PC-9 (cell line): ENCODE measurements at regions of chr3 and their contacts with region 1.

Region 1: GRCh38 chr3:111967651-111968274 is 11.1 kb upstream of the ABHD10 start:
- DNase-seq: peak; percentile 71 to 85
- H3K4me3 ChIP-seq: no peak overlapping the region
- H3K27ac ChIP-seq: peak overlapping the region; percentile 54
- H3K4me1 ChIP-seq: peaks cover 25% of the 10 kb centered on the region
- H3K27me3 ChIP-seq: no peaks in the 10 kb centered on the region
- CTCF ChIP-seq: peak; percentile 99

Region 2: DNA sequence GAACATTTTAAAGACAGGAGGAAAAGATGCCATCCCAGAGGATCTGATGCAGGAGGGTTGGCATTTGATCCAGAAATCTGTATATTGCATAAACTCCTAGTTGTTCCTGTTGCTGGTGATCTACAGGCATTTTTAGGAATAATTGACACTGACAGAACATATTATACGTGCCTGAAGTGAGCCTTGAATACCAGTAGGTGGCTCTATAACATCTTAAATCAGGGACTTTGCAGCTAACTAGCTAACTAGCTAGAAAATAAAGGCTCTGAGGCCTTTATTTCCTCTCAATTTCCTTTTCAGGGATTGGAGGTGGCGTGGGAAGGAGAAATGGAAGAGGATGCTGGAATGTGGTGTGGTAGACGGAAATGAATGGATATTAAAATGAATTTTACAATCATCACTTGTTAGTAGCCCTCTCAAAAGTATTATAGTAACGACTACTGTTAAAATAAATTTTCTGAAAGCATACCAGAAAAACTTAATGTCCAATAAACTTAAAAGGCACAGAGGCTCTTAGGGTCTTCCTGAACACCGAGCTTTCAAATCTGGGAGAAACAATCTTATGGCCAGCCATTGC is 298.8 kb before region 1 on chr3:
- CTCF ChIA-PET with region 1: interaction called, 4 read pairs
- POLR2A ChIA-PET with region 1: no interaction called
- intact Hi-C with region 1: loop called (anchors 1 kb)
- DNase-seq: peak; percentile 16 to 78
- H3K4me3 ChIP-seq: no peak overlapping the region
- H3K27ac ChIP-seq: no peak overlapping the region
- H3K4me1 ChIP-seq: peaks cover 25% of the 10 kb centered on the region
- H3K27me3 ChIP-seq: no peaks in the 10 kb centered on the region
- CTCF ChIP-seq: peak; percentile 98

Region 3: DNA sequence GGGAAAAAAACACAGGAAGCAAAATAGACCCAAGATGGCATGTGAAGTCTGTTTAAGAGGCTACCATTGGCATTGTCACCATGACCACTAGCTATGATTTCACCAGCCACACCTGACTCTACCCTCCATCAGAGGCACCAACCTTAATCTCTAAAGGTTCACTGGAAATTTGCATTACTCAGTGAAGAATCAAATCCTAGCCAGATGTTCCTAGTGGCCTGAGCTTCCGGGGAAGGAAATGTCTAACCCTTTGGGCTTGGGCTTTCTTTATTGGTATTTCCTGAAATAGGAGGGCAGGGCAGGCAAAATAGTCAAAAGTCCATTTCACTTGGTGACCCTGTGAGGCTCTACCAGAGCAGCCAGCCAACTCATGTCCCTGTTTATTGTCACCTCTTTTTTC is 219.6 kb before region 1 on chr3:
- CTCF ChIA-PET with region 1: interaction called, 19 read pairs
- POLR2A ChIA-PET with region 1: no interaction called
- intact Hi-C with region 1: no loop called
- DNase-seq: no peak
- H3K4me3 ChIP-seq: no peak overlapping the region
- H3K27ac ChIP-seq: peak overlapping the region; percentile 62
- H3K4me1 ChIP-seq: peaks cover 27% of the 10 kb centered on the region
- H3K27me3 ChIP-seq: no peaks in the 10 kb centered on the region
- CTCF ChIP-seq: no peak

Region 4: DNA sequence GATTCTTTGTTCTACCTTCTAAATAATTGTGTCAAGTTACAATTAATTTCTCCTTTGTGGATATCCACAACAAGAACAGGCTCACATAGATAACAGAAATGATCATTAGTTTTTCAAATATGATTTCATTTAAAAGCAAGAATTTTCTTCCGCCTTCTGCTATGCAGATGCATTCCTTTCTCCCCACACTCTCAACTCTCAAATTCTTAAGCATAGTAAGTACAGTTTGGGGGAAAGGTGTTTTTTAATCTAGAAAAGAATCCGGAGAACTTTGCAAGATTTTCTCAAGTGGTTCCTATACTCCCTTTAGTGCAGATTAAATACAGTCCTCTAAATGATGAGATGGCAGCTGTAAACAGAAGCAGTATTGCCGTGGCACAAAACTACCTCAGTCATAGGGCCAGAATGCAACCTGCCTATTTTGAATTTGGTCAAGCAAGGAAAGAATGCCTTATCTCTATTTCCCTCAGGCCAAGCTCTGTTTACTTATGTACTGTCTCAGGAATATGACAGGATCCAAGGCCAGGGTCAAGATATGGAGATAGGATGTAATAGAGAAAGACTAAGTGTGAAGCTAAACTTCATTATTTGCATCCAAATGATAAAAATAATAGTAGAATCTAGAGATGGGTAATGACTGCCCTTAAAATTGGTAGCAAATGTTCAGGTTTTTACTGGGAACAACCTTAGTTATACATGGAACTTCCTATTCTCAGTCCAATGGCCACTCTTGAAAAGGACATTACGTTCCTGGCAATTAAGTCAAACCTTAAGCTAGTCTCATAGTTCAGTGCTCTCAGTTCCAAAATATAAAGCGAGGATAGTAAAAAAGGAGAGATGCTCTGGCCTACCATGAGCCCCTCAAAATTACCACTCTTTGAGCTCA is 186.0 kb before region 1 on chr3:
- CTCF ChIA-PET with region 1: interaction called, 10 read pairs
- POLR2A ChIA-PET with region 1: no interaction called
- intact Hi-C with region 1: no loop called
- DNase-seq: no peak
- H3K4me3 ChIP-seq: no peak overlapping the region
- H3K27ac ChIP-seq: no peak overlapping the region
- H3K4me1 ChIP-seq: peaks cover 11% of the 10 kb centered on the region; the same call in 1 of the 2 replicates
- H3K27me3 ChIP-seq: no peaks in the 10 kb centered on the region
- CTCF ChIP-seq: no peak

Region 5: DNA sequence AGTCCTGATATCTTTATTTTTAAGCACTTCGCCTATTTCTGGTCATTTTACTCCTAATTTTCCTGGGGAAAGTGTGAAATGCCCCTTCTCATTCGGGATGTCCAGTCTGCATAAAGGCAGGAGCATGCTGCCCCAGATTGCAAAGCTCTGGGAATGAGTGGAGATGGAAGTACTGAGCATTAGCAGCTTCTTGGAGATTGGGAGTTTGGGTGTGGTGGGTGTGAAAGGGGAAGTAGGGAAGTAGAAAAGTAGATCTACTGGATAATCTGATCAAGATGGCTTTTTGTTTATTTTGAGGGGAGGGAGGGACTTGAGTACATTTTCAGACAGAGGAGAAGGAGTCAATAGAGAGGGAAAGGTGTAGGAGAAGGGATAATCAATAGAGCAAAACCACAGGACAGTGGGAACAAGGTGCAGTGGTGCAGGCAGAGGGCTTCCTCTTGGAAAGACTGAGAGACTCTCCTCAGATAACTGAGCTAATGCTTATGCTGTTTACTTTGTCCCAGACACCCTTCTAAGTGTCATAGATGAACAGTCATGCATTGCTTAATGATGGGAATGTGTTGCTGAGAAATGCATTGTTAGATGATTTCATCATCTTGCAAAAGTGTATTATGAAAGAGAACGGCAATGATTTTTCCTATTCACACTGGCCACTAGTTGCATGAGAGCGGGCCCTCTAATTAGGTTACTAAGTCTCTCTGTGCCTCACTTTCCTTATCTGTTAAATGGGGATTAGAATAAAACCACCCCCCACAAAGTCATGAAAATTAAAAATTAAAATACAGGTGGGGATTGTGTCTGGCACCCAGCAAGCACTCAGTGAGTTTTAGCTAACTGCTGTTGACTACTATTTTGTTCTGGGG is 63.2 kb before region 1 on chr3:
- CTCF ChIA-PET with region 1: interaction called, 4 read pairs
- POLR2A ChIA-PET with region 1: no interaction called
- intact Hi-C with region 1: loop called (anchors 2 kb)
- DNase-seq: peak; percentile 47 to 99
- H3K4me3 ChIP-seq: no peak overlapping the region; the same call in 1 of the 2 replicates
- H3K27ac ChIP-seq: peak overlapping the region; percentile 96
- H3K4me1 ChIP-seq: peaks cover 55% of the 10 kb centered on the region
- H3K27me3 ChIP-seq: no peaks in the 10 kb centered on the region
- CTCF ChIP-seq: peak; percentile 30

Region 6: GRCh38 chr3:112149136-112149535 is 181.4 kb after region 1 on chr3:
- CTCF ChIA-PET with region 1: no interaction called
- POLR2A ChIA-PET with region 1: no interaction called
- intact Hi-C with region 1: no loop called
- DNase-seq: no peak
- H3K4me3 ChIP-seq: no peak overlapping the region
- H3K27ac ChIP-seq: no peak overlapping the region
- H3K4me1 ChIP-seq: no peaks in the 10 kb centered on the region
- H3K27me3 ChIP-seq: no peaks in the 10 kb centered on the region
- CTCF ChIP-seq: no peak